ENCODE measurements at regions of chr3 and their contacts with region 1.

Region 1: DNA sequence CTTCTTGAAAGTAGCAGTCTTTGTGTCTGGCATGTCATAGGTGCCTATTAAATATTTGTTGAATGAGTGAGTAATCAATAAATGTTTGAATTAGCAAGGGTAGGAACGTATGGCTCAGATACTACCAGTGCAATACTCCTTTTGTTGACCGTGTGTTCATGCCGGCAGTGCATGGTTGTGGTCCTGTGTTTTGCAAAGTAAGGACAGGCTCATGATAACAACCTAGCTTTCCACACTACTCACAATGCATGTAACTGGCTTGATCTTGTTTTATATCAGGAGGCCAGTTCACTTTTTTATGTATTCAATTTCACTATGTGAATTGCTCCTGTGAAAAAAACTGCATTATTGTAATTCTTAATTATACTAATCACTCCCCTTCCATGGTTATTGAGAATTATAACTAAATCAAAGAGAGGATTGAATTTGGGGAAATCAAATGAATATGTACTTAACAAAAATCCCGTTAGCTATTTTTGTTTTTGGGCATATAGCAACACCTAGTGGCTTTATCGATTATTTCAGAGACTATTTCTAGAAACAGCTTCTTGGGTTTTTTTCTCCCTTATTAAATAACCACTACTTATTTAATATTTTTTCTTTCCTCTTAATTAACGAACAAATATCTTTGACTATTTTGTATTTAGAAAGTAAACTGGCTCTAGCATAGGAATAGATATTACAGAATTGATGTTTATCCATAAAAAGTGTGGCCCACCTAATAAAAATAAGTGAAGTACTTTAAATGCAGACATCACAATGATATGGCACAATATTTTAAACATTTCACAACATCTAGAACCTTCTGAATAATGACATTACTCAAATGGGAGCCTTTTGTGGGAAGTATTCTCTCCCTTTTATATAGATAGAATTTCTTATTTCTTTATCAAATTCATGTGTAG is 218.5 kb downstream of the BBX start:
- DNase-seq: no peak
- H3K4me3 Mint-ChIP-seq: no peak overlapping the region
- H3K27ac Mint-ChIP-seq: no peak overlapping the region
- H3K4me1 Mint-ChIP-seq: no peaks in the 10 kb centered on the region
- H3K27me3 Mint-ChIP-seq: no peaks in the 10 kb centered on the region

Region 2: GRCh38 chr3:107574650-107575049 is 166.6 kb before region 1 on chr3:
- CTCF ChIA-PET with region 1: interaction called, 10 read pairs
- intact Hi-C with region 1: loop called (anchors 2 kb)
- DNase-seq: peak; percentile 22
- H3K4me3 Mint-ChIP-seq: no peak overlapping the region
- H3K27ac Mint-ChIP-seq: no peak overlapping the region
- H3K4me1 Mint-ChIP-seq: peaks cover 27% of the 10 kb centered on the region
- H3K27me3 Mint-ChIP-seq: no peaks in the 10 kb centered on the region

Region 3: DNA sequence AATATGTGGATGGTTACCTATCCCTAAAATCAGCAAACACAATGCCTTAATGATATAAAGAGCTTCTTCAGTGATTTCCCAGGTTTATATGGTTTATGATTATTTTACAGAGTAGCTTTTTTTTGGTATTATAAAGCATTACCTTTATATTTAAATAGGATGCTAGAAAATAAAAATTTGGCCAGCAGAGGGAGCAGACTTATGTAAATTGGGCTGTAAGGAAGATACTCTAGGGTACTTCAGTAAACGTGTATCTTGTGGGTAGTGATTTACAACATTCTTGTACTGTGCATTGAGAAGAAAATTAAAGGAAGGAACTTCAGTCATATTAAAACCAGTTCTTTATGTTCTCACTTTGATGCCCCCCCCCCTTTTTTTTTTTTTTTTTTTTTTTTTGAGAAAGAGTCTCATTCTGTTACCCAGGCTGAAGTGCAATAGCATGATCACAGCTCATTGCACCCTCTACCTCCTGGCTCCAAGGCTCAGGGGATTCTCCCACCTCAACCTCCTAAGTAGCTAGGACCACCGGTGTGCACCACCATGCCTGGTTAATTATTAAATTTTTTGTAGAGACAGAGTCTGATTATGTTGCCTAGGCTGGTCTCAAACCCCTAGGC is 50.6 kb before region 1 on chr3:
- CTCF ChIA-PET with region 1: interaction called, 12 read pairs
- intact Hi-C with region 1: loop called (anchors 1 kb)
- DNase-seq: no peak
- H3K4me3 Mint-ChIP-seq: no peak overlapping the region
- H3K27ac Mint-ChIP-seq: no peak overlapping the region
- H3K4me1 Mint-ChIP-seq: peaks cover 20% of the 10 kb centered on the region
- H3K27me3 Mint-ChIP-seq: no peaks in the 10 kb centered on the region

Region 4: GRCh38 chr3:107753480-107753879 is 12.2 kb after region 1 on chr3:
- CTCF ChIA-PET with region 1: interaction called, 15 read pairs
- intact Hi-C with region 1: no loop called
- DNase-seq: peak; percentile 37
- H3K4me3 Mint-ChIP-seq: no peak overlapping the region
- H3K27ac Mint-ChIP-seq: no peak overlapping the region
- H3K4me1 Mint-ChIP-seq: no peaks in the 10 kb centered on the region
- H3K27me3 Mint-ChIP-seq: no peaks in the 10 kb centered on the region